Pancreas (tissue), 10 donors: ENCODE measurements at regions of chr20 and their contacts with region 1.

Region 1: GRCh38 chr20:49982346-49983122 is at the start of gene SNAI1:
- DNase-seq: peak; percentile 78 to 93 (median 86)
- ATAC-seq: peak; percentile 95 to 96 (median 96)
- H3K4me3 ChIP-seq: peak within 1 kb of the TSS in 3 of 4 donors; percentile 12 to 48 (median 33)
- H3K27ac ChIP-seq: no peak within 1 kb of the TSS
- H3K4me1 ChIP-seq: peaks cover 0 to 7% (median 4%) of the 10 kb centered on the region in 3 donors
- H3K27me3 ChIP-seq: no peaks in the 10 kb centered on the region
- CTCF ChIP-seq: peak in 2 of 4 donors; percentile 25 to 26
- total RNA-seq, gene SNAI1: 0.31 to 1.8 (median 0.52) TPM

Region 2: DNA sequence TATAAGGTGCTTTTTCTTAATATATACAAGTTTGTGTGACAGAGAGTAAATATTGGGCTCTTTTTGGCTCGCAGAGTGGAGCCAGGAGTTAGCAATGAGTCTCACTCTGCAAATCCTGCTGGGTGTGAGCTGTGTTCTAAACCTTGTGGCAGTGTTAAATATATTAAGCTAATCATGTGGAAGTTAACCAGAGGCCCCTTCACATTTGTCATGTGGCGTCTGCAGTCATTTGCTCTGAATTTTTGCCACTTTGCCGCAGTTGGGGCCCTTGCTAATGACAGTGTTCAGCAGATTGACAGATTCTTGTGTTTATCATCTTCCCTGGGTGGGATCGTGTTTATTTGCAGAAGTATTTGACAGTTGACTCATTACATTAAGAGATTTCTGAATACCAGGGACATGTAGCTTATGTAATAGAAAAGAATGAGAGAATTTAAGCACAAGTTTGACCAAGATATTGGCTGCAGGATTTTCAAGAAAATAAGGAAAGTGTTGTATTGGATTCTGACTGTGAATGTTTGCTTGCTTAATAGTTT is 105.1 kb before region 1 on chr20:
- intact Hi-C with region 1: no loop called
- DNase-seq: no peak
- ATAC-seq: no peak
- H3K4me3 ChIP-seq: no peak overlapping the region
- H3K27ac ChIP-seq: no peak overlapping the region
- H3K4me1 ChIP-seq: peaks cover 13 to 18% (median 14%) of the 10 kb centered on the region in 3 donors
- H3K27me3 ChIP-seq: no peaks in the 10 kb centered on the region
- CTCF ChIP-seq: no peak

Region 3: DNA sequence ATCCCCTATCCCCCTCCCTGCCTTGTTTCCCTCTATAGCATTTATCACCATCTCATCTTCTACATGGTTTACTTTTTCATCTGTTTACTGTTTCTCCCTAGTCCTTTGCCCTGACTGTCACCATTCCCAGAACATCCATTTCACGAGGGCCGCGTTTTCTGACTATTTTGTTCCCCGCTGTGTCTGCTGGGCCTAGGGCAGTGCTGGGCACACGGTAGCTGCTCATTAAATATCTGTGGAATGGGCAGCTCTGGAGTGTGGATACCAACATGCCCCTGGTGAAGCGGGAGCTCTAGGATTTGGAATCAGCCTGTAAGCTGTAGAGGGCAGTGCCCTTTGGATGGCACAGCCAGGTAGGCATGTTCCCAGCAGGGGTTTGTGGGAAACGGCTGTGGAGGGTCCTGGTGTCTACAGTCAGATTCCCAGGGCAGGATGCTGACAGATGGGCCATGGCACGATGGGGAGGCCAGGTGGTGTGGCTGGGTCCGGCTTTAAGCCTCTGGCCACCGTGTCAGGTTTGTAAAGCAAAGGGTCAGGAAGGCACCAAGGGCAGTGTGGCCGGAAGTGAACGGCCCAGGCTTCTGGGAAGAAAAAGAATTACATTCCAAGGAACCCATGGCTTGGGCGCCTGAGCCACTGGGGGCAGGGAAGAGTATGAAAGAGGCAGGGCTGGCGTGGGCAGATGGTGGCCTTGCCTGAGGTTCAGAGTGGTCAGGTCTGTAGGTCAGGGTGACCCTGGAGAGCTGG is 85.5 kb after region 1 on chr20:
- intact Hi-C with region 1: loop called in 2 of 3 experiments (anchors 5 kb)
- DNase-seq: no peak
- ATAC-seq: no peak
- H3K4me3 ChIP-seq: no peak overlapping the region
- H3K27ac ChIP-seq: no peak overlapping the region
- H3K4me1 ChIP-seq: no peaks in the 10 kb centered on the region
- H3K27me3 ChIP-seq: no peaks in the 10 kb centered on the region
- CTCF ChIP-seq: no peak

Region 4: GRCh38 chr20:50153485-50154377 is 171.2 kb after region 1 on chr20 and contains the start of gene PEDS1:
- intact Hi-C with region 1: loop called in 1 of 3 experiments (anchors 10 kb)
- DNase-seq: peak; percentile 86 to 97 (median 94)
- ATAC-seq: peak; percentile 83 to 92 (median 90)
- H3K4me3 ChIP-seq: peak within 1 kb of the TSS; percentile 65 to 90 (median 90)
- H3K27ac ChIP-seq: peak within 1 kb of the TSS; percentile 69 to 87 (median 83)
- H3K4me1 ChIP-seq: peaks cover 33 to 34% (median 34%) of the 10 kb centered on the region in 3 donors
- H3K27me3 ChIP-seq: no peaks in the 10 kb centered on the region
- CTCF ChIP-seq: no peak
- total RNA-seq, gene PEDS1: 3.5 to 9.8 (median 6.1) TPM

Region 5: DNA sequence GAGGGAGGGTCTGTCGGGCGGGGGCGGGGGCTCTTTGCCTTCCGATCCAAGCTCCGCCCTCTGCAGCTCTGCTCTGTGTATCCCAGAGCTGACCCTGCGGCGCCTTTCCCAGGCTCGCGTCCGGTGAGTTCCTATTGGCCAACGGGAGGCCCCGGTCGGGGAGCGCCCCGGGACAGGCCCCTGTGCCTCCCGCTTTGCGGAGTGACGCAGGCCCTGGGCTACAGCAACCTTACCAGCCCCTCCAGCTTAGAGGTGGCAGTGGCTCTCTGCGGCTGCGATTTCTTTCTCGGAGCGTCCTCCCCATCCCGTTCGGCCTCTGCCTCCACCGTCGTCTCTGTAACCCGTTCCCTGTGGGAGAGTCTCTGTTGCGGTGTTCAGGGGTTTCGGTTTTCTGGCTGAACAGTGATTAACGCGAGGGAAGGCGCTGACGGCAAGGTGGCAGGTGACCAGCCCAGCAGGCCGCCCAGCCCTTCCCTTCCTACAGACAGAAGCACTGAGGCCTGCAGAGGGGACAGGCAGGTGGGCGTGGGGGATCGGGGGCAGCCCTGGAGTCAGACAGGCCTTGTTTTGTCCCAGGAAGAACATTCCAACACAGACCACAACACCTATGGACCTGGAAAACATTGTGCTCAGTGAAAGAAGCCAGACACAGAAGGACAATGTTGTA is 189.9 kb after region 1 on chr20:
- intact Hi-C with region 1: loop called in 1 of 3 experiments (anchors 10 kb)
- DNase-seq: peak; percentile 77 to 91 (median 86)
- ATAC-seq: peak; percentile 92 to 95 (median 94)
- H3K4me3 ChIP-seq: peak overlapping the region; percentile 29 to 63 (median 42)
- H3K27ac ChIP-seq: peak overlapping the region; percentile 66 to 88 (median 78)
- H3K4me1 ChIP-seq: peaks cover 0 to 6% (median 0%) of the 10 kb centered on the region in 3 donors
- H3K27me3 ChIP-seq: no peaks in the 10 kb centered on the region
- CTCF ChIP-seq: no peak